Uterus (tissue), 4 donors: ENCODE measurements at regions of chr10 and their contacts with region 1.

Region 1: DNA sequence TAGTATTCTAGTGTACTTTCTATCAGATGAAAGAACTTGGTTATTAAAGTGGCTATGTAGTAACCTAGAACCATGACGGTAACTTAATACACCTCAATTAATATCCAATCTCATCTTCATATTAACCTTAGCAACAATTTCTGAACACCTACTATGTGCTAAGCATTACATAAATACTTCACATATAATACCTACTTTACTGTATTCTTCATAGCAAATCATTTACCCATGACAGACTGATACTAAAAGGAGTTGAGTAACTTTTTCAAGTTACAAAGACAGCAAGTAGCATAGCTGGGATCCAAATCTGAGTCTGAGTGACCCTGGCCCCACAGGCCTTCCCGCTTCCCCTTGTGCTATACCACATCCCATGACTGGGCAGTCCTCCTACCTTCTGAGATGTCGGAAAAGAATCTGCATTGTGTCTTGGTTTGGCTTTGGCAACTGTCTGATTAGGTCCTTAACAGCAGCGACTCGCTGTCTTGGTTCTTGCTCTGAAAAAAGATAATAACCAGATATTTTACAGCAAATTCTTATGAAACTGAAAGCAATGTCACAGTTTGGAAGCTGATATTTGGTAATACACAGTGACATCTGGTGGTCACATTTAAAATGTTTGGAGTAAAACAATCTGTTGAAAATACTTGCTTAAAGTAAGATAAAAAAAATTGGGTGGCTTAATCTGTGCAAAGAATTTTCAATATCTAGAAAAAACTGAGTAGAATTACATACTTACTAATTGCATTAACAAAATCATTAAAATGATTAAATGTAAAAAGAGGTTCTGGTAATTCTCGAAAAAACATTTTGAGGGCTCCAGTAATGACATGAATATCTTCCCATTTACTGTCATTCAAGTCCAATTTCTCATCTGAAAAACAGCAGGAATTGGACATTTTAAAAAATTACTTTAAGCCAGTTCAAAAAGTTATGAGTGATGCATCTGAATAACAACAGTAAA is 120.1 kb downstream of the ARHGAP12 start:
- DNase-seq: peak; percentile 43 to 44
- H3K4me3 ChIP-seq: peak overlapping the region in 1 of 2 donors; percentile 16
- H3K27ac ChIP-seq: peak overlapping the region; percentile 78 to 87
- H3K4me1 ChIP-seq: no peaks in the 10 kb centered on the region
- H3K27me3 ChIP-seq: no peaks in the 10 kb centered on the region
- CTCF ChIP-seq: peak; percentile 49 to 83 (median 70)
- POLR2A ChIP-seq: no peak

Region 2: DNA sequence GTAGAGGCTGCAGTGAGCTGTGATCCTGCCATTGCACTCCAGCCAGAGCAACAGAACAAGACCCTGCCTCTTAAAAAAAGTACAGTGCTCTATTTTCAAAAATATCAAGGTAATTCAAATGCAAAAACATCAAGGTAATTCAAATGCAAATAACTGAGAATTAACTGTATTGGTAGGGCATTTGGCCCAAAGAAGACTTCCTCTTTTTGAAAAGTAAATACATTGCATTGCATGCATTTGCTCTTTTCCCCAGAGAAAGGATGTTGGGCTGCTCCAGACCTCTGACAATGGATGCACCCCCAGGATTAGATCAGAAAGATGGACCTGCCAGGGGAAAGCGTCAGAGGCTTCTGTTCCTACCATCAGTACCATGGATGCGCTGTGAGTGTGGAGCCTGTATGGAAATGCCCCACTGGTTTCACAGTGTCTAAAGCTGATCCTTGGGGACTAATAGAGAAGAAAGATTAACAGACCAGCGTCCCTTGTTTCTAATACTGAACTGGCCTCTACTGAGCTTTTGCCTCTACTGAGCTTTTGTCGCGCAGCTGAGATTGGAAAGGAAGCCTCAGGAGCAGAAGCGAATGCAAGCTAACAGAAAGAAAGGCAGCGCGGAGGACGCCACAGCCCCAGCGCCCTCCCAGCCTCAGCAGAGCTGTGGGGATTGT is 1085.5 kb before region 1 on chr10:
- intact Hi-C with region 1: loop called (anchors 10 kb)
- DNase-seq: no peak
- H3K4me3 ChIP-seq: no peak overlapping the region
- H3K27ac ChIP-seq: no peak overlapping the region
- H3K4me1 ChIP-seq: no peaks in the 10 kb centered on the region
- H3K27me3 ChIP-seq: no peaks in the 10 kb centered on the region
- CTCF ChIP-seq: no peak
- POLR2A ChIP-seq: no peak

Region 3: GRCh38 chr10:31687663-31688482 is 120.7 kb before region 1 on chr10:
- intact Hi-C with region 1: no loop called
- DNase-seq: no peak
- H3K4me3 ChIP-seq: no peak overlapping the region
- H3K27ac ChIP-seq: no peak overlapping the region
- H3K4me1 ChIP-seq: no peaks in the 10 kb centered on the region
- H3K27me3 ChIP-seq: no peaks in the 10 kb centered on the region
- CTCF ChIP-seq: no peak
- POLR2A ChIP-seq: no peak

Region 4: GRCh38 chr10:31947144-31947926 is 138.8 kb after region 1 on chr10:
- intact Hi-C with region 1: no loop called
- DNase-seq: peak in 1 of 2 donors; percentile 69
- H3K4me3 ChIP-seq: no peak overlapping the region
- H3K27ac ChIP-seq: peak overlapping the region; percentile 20 to 67
- H3K4me1 ChIP-seq: no peaks in the 10 kb centered on the region
- H3K27me3 ChIP-seq: no peaks in the 10 kb centered on the region
- CTCF ChIP-seq: peak; percentile 38 to 60 (median 50)
- POLR2A ChIP-seq: no peak